Motor neuron (in vitro differentiated cells): ENCODE measurements at regions of chr18 and their contacts with region 1.

Region 1: GRCh38 chr18:741931-742512 is 29.6 kb upstream of the ENOSF1 start:
- ATAC-seq: peak in 5 of 8 experiments; percentile 45 to 82 (median 74)
- H3K4me3 ChIP-seq: no peak overlapping the region
- H3K27ac ChIP-seq: no peak overlapping the region
- H3K4me1 ChIP-seq: no peaks in the 10 kb centered on the region

Region 2: DNA sequence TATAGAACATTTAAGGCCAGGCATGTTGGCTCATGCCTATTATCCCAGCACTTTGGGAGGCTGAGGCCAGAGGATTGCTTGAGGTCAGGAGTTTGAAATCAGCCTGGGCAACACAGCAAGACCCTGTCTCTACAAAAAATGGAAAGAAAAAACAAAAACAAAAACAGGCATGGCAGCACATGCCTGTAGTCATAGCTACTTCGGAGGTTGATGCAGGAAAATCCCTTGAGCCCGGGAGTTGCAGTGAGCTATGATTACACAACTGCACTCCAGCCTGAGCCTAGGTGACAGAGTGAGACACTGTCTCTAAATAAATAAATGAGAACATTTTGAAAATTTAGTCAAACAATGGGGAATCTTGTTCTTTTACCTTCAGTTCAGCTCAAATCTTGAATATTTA is 82.2 kb after region 1 on chr18:
- in situ Hi-C with region 1: loop called in 2 of 9 experiments (anchors 10 to 25 kb)
- ATAC-seq: peak in 2 of 8 experiments; percentile 58 to 71
- H3K4me3 ChIP-seq: no peak overlapping the region
- H3K27ac ChIP-seq: no peak overlapping the region
- H3K4me1 ChIP-seq: no peaks in the 10 kb centered on the region

Region 3: GRCh38 chr18:839224-840022 is 97.4 kb after region 1 on chr18:
- in situ Hi-C with region 1: loop called in 2 of 9 experiments (anchors 10 to 25 kb)
- ATAC-seq: peak; percentile 91 to 99 (median 96)
- H3K4me3 ChIP-seq: no peak overlapping the region
- H3K27ac ChIP-seq: no peak overlapping the region
- H3K4me1 ChIP-seq: no peaks in the 10 kb centered on the region